ENCODE measurements at regions of chr6 and their contacts with region 1.

Region 1: GRCh38 chr6:31267651-31268368 is 4.1 kb downstream of the HLA-C start:
- DNase-seq: no peak
- ATAC-seq: no peak
- H3K4me3 ChIP-seq: no peak overlapping the region
- H3K27ac ChIP-seq: no peak overlapping the region
- H3K4me1 ChIP-seq: no peaks in the 10 kb centered on the region
- H3K27me3 ChIP-seq: no peaks in the 10 kb centered on the region
- CTCF ChIP-seq: no peak

Region 2: DNA sequence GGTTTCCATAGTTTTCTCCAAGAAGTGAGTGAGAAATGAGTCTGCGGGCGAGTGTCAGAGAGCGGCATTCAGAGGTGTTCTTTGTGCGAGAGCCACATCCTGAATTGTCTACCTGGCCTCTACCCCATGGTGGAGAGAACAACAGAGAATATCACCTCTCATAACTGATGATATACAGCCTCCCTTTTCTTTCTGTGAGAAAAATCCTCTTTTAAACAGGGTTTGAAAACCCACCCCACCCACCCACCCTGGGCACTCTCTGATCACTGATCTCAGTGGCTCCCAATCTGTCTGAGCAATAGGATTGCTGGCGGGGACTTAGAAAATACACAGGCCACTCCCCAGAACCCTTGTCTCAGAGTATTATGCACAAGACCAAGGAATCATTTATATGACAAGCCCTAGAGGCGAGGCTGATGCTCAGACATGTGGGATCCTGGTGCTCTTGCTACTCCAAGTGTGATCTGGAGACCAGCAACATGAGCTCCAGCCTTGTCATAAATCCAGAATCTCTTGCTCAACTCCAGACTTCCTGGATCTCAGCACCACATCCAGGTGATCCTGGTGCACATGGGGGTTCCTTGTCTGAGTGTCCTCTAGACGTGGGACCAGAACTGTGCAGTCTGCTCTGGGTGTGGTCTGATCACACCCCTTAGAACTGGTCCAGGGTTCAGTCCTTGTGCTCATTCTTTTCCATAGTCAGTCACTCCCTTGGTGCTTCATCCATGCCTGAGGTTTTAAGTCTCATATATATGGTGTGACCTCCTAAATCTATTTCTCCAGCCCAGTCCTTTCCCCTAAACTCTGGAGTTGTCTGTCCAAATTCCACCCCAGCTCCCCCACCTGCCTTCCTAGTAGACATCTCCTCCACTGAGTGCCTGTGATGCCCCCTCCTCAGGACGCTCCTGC is 83.8 kb after region 1 on chr6:
- intact Hi-C with region 1: loop called in 1 of 2 experiments (anchors 2 kb)
- DNase-seq: no peak
- ATAC-seq: no peak
- H3K4me3 ChIP-seq: no peak overlapping the region
- H3K27ac ChIP-seq: no peak overlapping the region
- H3K4me1 ChIP-seq: no peaks in the 10 kb centered on the region
- H3K27me3 ChIP-seq: peaks cover 0 to 7% (median 3%) of the 10 kb centered on the region in 3 donors
- CTCF ChIP-seq: no peak

Region 3: DNA sequence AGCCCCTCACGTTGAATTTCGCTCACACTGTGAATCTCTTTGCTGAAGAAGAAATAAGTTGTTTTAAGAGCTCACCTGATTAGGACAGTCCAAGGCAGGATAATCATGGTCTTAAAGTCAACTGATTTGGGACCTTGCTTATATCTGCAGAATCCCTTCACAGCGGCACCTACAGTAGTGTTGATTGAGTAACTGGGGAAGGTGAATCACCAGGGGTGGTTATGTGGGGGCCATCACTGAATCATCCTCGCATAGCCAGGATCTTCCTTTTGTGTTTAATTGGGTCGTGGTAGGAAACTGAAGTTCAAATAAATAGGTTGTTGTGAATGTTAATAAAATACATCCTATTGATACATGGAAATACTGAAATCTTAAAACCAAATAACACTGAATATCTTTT is 115.3 kb after region 1 on chr6:
- intact Hi-C with region 1: no loop called
- DNase-seq: no peak
- ATAC-seq: no peak
- H3K4me3 ChIP-seq: no peak overlapping the region
- H3K27ac ChIP-seq: no peak overlapping the region
- H3K4me1 ChIP-seq: no peaks in the 10 kb centered on the region
- H3K27me3 ChIP-seq: peaks cover 0 to 16% (median 2%) of the 10 kb centered on the region in 3 donors
- CTCF ChIP-seq: no peak

Measured in psoas muscle (tissue), 8 donors.